CD4-positive, alpha-beta T cell (primary cell): ENCODE measurements at regions of chr13 and their contacts with region 1.

Region 1: GRCh38 chr13:110593430-110594130 is 21.8 kb upstream of the NAXD start:
- DNase-seq: peak in 4 of 14 experiments; percentile 13 to 65 (median 61)
- ATAC-seq: peak; percentile 60
- H3K4me3 ChIP-seq: no peak overlapping the region
- H3K4me3 Mint-ChIP-seq: no peak overlapping the region
- H3K27ac ChIP-seq: no peak overlapping the region
- H3K27ac Mint-ChIP-seq: no peak overlapping the region
- H3K4me1 ChIP-seq: no peaks in the 10 kb centered on the region
- H3K4me1 Mint-ChIP-seq: no peaks in the 10 kb centered on the region
- H3K27me3 ChIP-seq: no peaks in the 10 kb centered on the region
- H3K27me3 Mint-ChIP-seq: peaks cover 5% of the 10 kb centered on the region
- CTCF ChIP-seq: peak; percentile 58

Region 2: GRCh38 chr13:111049802-111050538 is 456.4 kb after region 1 on chr13:
- CTCF ChIA-PET with region 1: no interaction called
- POLR2A ChIA-PET with region 1: no interaction called
- intact Hi-C with region 1: loop called in 1 of 2 experiments (anchors 10 kb)
- DNase-seq: no peak
- ATAC-seq: no peak
- H3K4me3 ChIP-seq: no peak overlapping the region
- H3K4me3 Mint-ChIP-seq: no peak overlapping the region
- H3K27ac ChIP-seq: no peak overlapping the region
- H3K27ac Mint-ChIP-seq: no peak overlapping the region
- H3K4me1 ChIP-seq: no peaks in the 10 kb centered on the region
- H3K4me1 Mint-ChIP-seq: no peaks in the 10 kb centered on the region
- H3K27me3 ChIP-seq: no peaks in the 10 kb centered on the region
- H3K27me3 Mint-ChIP-seq: peaks cover 12% of the 10 kb centered on the region
- CTCF ChIP-seq: no peak